Heart left ventricle (tissue), 16 donors: ENCODE measurements at regions of chr2 and their contacts with region 1.

Region 1: GRCh38 chr2:101349893-101350662 is 37.2 kb downstream of the CREG2 start:
- DNase-seq: no peak
- ATAC-seq: no peak
- H3K4me3 ChIP-seq: no peak overlapping the region
- H3K27ac ChIP-seq: no peak overlapping the region
- H3K4me1 ChIP-seq: no peaks in the 10 kb centered on the region
- H3K27me3 ChIP-seq: no peaks in the 10 kb centered on the region
- CTCF ChIP-seq: peak in 6 of 12 donors; percentile 19 to 32 (median 24)
- POLR2A ChIP-seq: no peak

Region 2: DNA sequence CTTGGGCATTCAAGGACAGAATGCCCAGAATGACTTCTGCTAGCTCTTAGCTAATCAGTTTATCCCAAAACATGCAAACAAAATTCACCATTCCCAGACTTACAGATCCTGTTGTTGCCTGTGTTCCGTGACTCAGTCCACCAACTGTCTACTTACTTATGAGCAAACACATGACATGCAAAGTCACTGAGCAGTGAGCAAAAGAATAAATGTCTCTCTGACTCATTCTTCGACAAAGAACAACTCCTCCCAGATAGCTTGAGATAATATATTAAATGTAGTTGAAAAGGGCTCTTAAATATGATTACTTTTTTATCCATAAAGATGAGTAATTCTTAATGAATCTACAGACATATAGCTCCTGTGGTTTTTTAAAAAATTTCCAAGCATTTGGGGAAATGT is 46.2 kb after region 1 on chr2:
- intact Hi-C with region 1: loop called in 1 of 10 experiments (anchors 5 kb)
- DNase-seq: no peak
- ATAC-seq: no peak
- H3K4me3 ChIP-seq: no peak overlapping the region
- H3K27ac ChIP-seq: no peak overlapping the region
- H3K4me1 ChIP-seq: peaks cover 0 to 7% (median 0%) of the 10 kb centered on the region in 12 donors
- H3K27me3 ChIP-seq: no peaks in the 10 kb centered on the region
- CTCF ChIP-seq: no peak
- POLR2A ChIP-seq: no peak

Region 3: GRCh38 chr2:101461381-101461780 is 111.3 kb after region 1 on chr2:
- intact Hi-C with region 1: no loop called
- DNase-seq: no peak
- ATAC-seq: no peak
- H3K4me3 ChIP-seq: no peak overlapping the region
- H3K27ac ChIP-seq: no peak overlapping the region
- H3K4me1 ChIP-seq: peaks cover 0 to 30% (median 17%) of the 10 kb centered on the region in 12 donors
- H3K27me3 ChIP-seq: peaks cover 0 to 47% (median 0%) of the 10 kb centered on the region in 9 donors
- CTCF ChIP-seq: no peak
- POLR2A ChIP-seq: no peak